Activated CD4-positive, alpha-beta memory T cell treated with anti-CD3 and anti-CD28 coated beads for 36 hours (primary cell): ENCODE measurements at regions of chr19 and their contacts with region 1.

Region 1: GRCh38 chr19:7386308-7386707 is 37.6 kb downstream of the ARHGEF18 start:
- DNase-seq: peak; percentile 67
- H3K4me3 Mint-ChIP-seq: no peak overlapping the region
- H3K27ac Mint-ChIP-seq: peak overlapping the region; percentile 96
- H3K4me1 Mint-ChIP-seq: peaks cover 30% of the 10 kb centered on the region
- H3K27me3 Mint-ChIP-seq: no peaks in the 10 kb centered on the region

Region 2: DNA sequence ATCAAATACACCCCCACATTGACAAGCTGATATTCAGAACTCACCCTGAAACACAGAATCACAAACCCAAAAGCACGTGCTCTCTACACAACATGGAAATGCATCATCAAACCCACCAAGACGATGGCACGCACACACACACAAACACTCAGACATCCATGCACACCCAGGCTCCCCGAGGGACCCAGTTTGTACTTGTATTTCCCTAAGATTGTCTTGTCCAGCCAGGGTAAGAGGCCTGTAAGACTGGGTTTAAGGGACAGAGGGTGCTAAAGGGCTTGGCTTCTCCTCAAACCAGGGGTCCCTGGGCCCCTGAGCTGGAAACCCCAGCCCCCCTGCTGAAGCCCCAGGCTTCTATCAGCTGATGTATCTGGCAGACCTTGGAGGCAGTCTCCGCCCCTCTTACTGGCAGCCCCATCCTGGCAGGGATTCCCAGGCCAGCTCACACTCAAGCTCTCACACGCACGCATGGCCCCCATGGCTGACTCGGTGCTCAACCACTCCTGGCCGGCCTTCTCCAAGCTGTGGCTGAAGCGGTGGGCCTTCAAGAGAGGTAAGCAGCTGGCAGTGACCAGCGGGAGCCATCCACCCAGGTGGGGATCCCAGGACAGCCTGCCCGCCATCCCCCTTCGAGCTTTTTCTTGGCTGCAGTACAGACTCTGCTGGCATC is 31.0 kb before region 1 on chr19:
- CTCF ChIA-PET with region 1: interaction called, 41 read pairs
- POLR2A ChIA-PET with region 1: no interaction called
- intact Hi-C with region 1: no loop called
- DNase-seq: no peak
- H3K4me3 Mint-ChIP-seq: no peak overlapping the region
- H3K27ac Mint-ChIP-seq: no peak overlapping the region
- H3K4me1 Mint-ChIP-seq: peaks cover 35% of the 10 kb centered on the region
- H3K27me3 Mint-ChIP-seq: no peaks in the 10 kb centered on the region

Region 3: GRCh38 chr19:7492142-7492541 is 105.8 kb after region 1 on chr19:
- CTCF ChIA-PET with region 1: no interaction called
- POLR2A ChIA-PET with region 1: no interaction called
- intact Hi-C with region 1: loop called (anchors 1 kb)
- DNase-seq: peak; percentile 83
- H3K4me3 Mint-ChIP-seq: no peak overlapping the region
- H3K27ac Mint-ChIP-seq: peak overlapping the region; percentile 25
- H3K4me1 Mint-ChIP-seq: peaks cover 28% of the 10 kb centered on the region
- H3K27me3 Mint-ChIP-seq: peaks cover 4% of the 10 kb centered on the region

Region 4: GRCh38 chr19:7674010-7675005 is 288.0 kb after region 1 on chr19:
- CTCF ChIA-PET with region 1: no interaction called
- POLR2A ChIA-PET with region 1: no interaction called
- intact Hi-C with region 1: loop called (anchors 10 kb)
- DNase-seq: peak; percentile 46
- H3K4me3 Mint-ChIP-seq: no peak overlapping the region
- H3K27ac Mint-ChIP-seq: no peak overlapping the region
- H3K4me1 Mint-ChIP-seq: peaks cover 41% of the 10 kb centered on the region
- H3K27me3 Mint-ChIP-seq: peaks cover 46% of the 10 kb centered on the region